ENCODE measurements at regions of chr14 and their contacts with region 1.

Region 1: GRCh38 chr14:35292051-35292769 is at the start of gene PSMA6:
- DNase-seq: peak; percentile 99
- H3K4me3 Mint-ChIP-seq: peak within 1 kb of the TSS; percentile 91
- H3K27ac Mint-ChIP-seq: peak within 1 kb of the TSS; percentile 96
- H3K4me1 Mint-ChIP-seq: peaks cover 11% of the 10 kb centered on the region
- H3K27me3 Mint-ChIP-seq: no peaks in the 10 kb centered on the region
- CTCF ChIP-seq: no peak
- total RNA-seq, gene PSMA6: 260 and 322 TPM in 2 replicates

Region 2: DNA sequence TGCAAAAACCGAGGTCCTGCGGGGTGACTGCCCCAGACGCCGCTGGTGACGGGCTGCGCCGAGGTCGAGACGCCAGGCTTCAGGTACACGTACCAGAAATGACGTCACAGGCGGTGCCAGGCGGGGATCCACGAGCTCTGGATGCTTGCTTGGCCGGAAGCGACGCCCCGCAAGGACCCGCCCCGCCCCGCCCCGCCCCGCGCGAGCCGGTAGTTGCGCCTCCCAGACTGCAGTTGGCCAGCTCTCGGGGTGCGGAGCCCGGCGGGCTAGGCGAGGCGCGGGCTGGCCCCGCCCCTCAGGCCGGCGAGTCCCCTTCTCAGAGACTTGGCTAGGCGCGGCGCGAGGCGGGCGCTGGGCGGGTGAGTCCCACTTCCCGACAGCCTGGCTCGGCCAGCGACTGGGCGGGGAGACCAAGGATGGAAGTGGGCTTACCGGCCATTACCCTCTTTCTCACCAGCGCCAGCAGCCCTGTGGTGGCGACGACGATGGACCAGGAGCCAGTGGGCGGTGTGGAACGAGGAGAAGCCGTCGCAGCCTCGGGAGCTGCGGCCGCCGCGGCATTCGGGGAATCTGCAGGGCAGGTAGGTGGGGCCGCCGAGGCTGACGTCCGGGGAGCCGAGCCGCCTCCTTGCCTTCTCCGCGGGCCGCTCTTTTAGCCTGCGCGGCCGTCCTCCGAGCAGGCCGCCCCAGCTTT is 246.0 kb before region 1 on chr14 and contains the start of gene FAM177A1:
- CTCF ChIA-PET with region 1: no interaction called
- POLR2A ChIA-PET with region 1: interaction called, 15 read pairs
- intact Hi-C with region 1: no loop called
- DNase-seq: peak; percentile 97
- H3K4me3 Mint-ChIP-seq: peak within 1 kb of the TSS; percentile 94
- H3K27ac Mint-ChIP-seq: peak within 1 kb of the TSS; percentile 98
- H3K4me1 Mint-ChIP-seq: peaks cover 24% of the 10 kb centered on the region
- H3K27me3 Mint-ChIP-seq: no peaks in the 10 kb centered on the region
- CTCF ChIP-seq: no peak
- total RNA-seq, gene FAM177A1: 73.9 and 74.6 TPM in 2 replicates

Region 3: DNA sequence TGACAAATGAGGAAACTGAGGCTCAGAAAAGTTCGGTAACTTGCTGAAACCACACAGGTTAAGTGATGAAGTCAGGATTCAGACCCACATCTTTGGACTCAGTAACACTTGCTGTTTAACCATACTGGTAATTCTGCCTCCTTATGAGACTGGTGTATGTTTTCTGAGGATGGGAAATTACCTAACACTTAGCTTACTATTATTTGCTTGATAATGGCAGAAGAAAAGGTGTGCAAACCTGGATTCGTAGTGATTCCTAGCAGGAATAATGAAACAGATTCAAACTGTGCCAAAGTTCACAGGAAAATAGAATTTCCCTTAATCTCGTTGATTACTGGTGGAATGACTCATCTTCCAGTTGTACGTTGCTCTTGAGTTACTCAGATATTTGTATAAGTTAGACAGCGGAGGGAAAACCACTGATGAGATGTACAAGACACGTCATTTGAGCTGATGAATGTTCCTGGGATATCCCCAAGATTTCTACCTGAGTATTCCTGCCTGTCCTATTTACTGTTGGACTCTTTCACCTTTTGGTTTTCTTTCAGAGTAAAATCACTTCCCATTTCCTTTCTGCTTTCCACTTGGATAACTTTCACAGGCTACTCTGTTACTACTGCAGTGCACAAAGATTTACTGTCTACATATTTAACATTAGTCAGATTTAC is 132.3 kb before region 1 on chr14:
- CTCF ChIA-PET with region 1: interaction called, 4 read pairs
- POLR2A ChIA-PET with region 1: interaction called, 9 read pairs
- intact Hi-C with region 1: loop called (anchors 10 kb)
- DNase-seq: peak; percentile 92
- H3K4me3 Mint-ChIP-seq: peak overlapping the region; percentile 52
- H3K27ac Mint-ChIP-seq: peak overlapping the region; percentile 96
- H3K4me1 Mint-ChIP-seq: peaks cover 48% of the 10 kb centered on the region
- H3K27me3 Mint-ChIP-seq: no peaks in the 10 kb centered on the region
- CTCF ChIP-seq: no peak

Region 4: DNA sequence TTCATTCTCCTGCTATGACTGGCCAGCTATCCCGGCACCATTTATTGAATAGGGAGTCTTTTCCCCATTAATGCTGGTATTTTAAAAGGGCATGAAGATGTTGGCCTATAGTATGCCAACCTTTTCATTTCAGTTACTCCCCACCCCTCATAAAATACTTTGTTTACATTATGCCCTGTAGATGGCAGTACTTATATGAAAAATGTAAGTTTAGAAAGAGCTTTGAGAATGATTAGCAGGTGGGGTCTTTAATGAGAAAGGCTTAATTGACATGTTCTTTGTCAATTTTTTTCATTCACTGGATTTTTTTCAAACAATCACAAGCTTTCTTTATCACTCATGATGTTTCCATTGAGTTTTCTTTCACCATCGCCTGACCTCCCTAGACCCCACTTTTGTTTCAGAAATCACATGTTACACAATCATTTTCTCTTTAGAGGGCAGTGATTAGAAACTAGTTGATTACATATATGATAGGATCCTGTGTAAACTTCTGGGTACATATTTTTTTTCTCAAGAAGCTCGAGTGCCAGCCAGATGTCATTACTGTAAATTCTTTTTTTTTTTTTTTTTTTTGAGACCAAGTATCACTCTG is 62.6 kb before region 1 on chr14:
- CTCF ChIA-PET with region 1: interaction called, 10 read pairs
- POLR2A ChIA-PET with region 1: interaction called, 26 read pairs
- intact Hi-C with region 1: no loop called
- DNase-seq: peak; percentile 24
- H3K4me3 Mint-ChIP-seq: no peak overlapping the region
- H3K27ac Mint-ChIP-seq: peak overlapping the region; percentile 35
- H3K4me1 Mint-ChIP-seq: peaks cover 23% of the 10 kb centered on the region
- H3K27me3 Mint-ChIP-seq: no peaks in the 10 kb centered on the region
- CTCF ChIP-seq: peak; percentile 34

Region 5: GRCh38 chr14:35247777-35248475 is 44.3 kb before region 1 on chr14:
- CTCF ChIA-PET with region 1: no interaction called
- POLR2A ChIA-PET with region 1: no interaction called
- intact Hi-C with region 1: no loop called
- DNase-seq: no peak
- H3K4me3 Mint-ChIP-seq: no peak overlapping the region
- H3K27ac Mint-ChIP-seq: no peak overlapping the region
- H3K4me1 Mint-ChIP-seq: no peaks in the 10 kb centered on the region
- H3K27me3 Mint-ChIP-seq: no peaks in the 10 kb centered on the region
- CTCF ChIP-seq: no peak

Region 6: GRCh38 chr14:35331605-35332516 is 39.7 kb after region 1 on chr14:
- CTCF ChIA-PET with region 1: interaction called, 7 read pairs
- POLR2A ChIA-PET with region 1: interaction called, 45 read pairs
- intact Hi-C with region 1: loop called (anchors 2 kb)
- DNase-seq: no peak
- H3K4me3 Mint-ChIP-seq: peak overlapping the region; percentile 6
- H3K27ac Mint-ChIP-seq: peak overlapping the region; percentile 66
- H3K4me1 Mint-ChIP-seq: peaks cover 24% of the 10 kb centered on the region
- H3K27me3 Mint-ChIP-seq: no peaks in the 10 kb centered on the region
- CTCF ChIP-seq: no peak

Region 7: DNA sequence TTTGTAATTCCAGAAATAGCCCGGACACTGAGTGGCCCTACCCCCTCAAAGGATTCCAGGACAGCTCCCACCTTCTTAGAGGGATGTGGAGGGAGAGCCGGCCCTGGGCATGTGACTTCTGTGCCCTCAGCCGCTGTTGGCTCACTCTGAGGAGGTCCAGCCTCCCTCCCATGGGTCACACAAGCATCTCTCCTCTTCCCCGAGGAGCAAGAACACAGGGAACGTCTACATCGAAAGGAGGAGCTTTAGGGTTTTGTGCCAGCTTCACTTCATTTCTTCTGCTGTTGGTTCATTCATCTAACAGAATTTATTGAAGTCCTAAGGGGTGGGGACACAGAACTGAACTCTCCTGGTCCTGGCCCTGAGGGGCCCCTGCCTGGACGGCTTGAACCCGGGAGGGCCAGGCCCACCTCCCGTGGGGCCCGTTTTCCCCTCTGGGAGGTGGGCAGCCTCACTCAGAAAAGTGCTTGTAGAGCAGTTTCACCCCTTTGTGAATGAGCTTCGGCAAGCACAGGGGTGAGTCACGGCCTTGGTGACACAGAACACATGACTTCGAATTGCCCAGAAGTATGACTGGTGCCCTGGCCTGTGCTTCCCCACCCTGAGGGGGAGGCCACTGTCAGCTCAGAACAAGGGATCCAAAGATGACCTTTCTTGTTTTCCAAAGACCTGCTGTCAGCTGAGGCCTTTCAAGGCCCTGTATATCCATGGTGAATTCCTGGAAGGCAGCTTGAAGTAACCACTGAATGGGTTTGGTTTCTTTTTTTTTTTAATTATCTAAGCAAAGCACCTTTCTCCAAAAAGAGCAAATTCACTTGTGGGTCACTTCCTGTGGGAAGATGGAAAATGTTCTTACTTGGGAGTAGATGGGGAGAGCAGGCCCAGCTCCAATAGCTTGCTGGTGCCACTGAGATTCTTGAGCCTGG is 73.2 kb after region 1 on chr14:
- CTCF ChIA-PET with region 1: no interaction called
- POLR2A ChIA-PET with region 1: interaction called, 24 read pairs
- intact Hi-C with region 1: no loop called
- DNase-seq: peak; percentile 82
- H3K4me3 Mint-ChIP-seq: no peak overlapping the region
- H3K27ac Mint-ChIP-seq: peak overlapping the region; percentile 81
- H3K4me1 Mint-ChIP-seq: peaks cover 5% of the 10 kb centered on the region
- H3K27me3 Mint-ChIP-seq: no peaks in the 10 kb centered on the region
- CTCF ChIP-seq: no peak

Region 8: GRCh38 chr14:35438910-35439713 is 146.9 kb after region 1 on chr14:
- CTCF ChIA-PET with region 1: no interaction called
- POLR2A ChIA-PET with region 1: no interaction called
- intact Hi-C with region 1: no loop called
- DNase-seq: peak; percentile 20
- H3K4me3 Mint-ChIP-seq: no peak overlapping the region
- H3K27ac Mint-ChIP-seq: no peak overlapping the region
- H3K4me1 Mint-ChIP-seq: no peaks in the 10 kb centered on the region
- H3K27me3 Mint-ChIP-seq: no peaks in the 10 kb centered on the region
- CTCF ChIP-seq: peak; percentile 39

Region 9: GRCh38 chr14:35458442-35458841 is 166.2 kb after region 1 on chr14:
- CTCF ChIA-PET with region 1: no interaction called
- POLR2A ChIA-PET with region 1: no interaction called
- intact Hi-C with region 1: no loop called
- DNase-seq: no peak
- H3K4me3 Mint-ChIP-seq: no peak overlapping the region
- H3K27ac Mint-ChIP-seq: no peak overlapping the region
- H3K4me1 Mint-ChIP-seq: no peaks in the 10 kb centered on the region
- H3K27me3 Mint-ChIP-seq: no peaks in the 10 kb centered on the region
- CTCF ChIP-seq: no peak

Region 10: GRCh38 chr14:35558680-35559079 is 266.5 kb after region 1 on chr14:
- CTCF ChIA-PET with region 1: no interaction called
- POLR2A ChIA-PET with region 1: no interaction called
- intact Hi-C with region 1: no loop called
- DNase-seq: no peak
- H3K4me3 Mint-ChIP-seq: no peak overlapping the region
- H3K27ac Mint-ChIP-seq: no peak overlapping the region
- H3K4me1 Mint-ChIP-seq: no peaks in the 10 kb centered on the region
- H3K27me3 Mint-ChIP-seq: no peaks in the 10 kb centered on the region
- CTCF ChIP-seq: no peak

Measured in MCF 10A (cell line).